HepG2 (cell line): ENCODE measurements at regions of chr2 and their contacts with region 1.

Region 1: GRCh38 chr2:23505984-23506380 is 121.0 kb downstream of the KLHL29 start:
- DNase-seq: no peak
- ATAC-seq: no peak
- H3K4me3 ChIP-seq: no peak overlapping the region
- H3K27ac ChIP-seq: no peak overlapping the region
- H3K4me1 ChIP-seq: peaks cover 34% of the 10 kb centered on the region
- H3K27me3 ChIP-seq: peaks cover 3 to 56% of the 10 kb centered on the region in 2 experiments
- CTCF ChIP-seq: no peak
- EP300 ChIP-seq: no peak
- POLR2A ChIP-seq: no peak
- RAD21 ChIP-seq: no peak

Region 2: DNA sequence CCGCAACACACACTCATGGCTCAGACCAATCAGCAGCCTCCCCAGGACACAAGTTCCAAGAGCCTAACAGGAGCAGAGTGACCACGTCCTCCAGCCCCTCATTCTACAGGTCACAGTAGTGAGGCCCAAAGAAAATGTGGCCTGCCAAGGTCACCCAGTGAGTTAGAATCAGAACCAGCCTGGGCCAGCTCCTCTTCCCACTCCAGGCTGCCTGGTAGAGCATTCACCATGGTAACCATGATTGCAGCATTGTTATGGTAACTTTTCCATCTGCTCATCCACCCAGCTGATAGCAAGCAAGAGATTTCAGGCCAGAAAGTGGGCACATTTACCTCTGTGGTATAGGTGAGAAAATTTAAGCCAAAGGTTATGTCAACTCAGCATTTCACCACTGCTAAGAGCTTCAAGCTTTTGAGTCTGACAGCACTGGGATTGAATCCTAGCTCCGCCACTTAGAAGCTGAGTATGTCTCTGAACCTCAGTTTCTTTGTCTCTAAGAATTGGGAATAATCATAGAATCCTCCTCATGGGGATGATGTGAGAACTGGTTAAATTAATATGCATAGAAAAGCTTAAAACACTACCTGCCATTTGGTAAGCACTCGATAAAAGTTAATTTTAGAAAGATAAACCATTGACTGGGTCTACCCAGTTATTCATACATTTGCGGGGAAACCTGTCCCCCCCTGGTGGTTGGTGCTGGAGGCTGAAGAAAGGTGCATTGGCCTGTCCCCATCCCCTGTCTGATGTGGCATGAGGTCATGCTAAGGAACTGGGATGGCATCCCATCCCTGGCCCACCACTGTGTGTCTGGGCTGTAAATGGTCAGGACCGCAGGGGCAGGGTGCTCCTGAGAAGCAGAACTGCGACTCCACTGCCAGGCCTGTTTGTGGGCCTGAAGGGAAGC is 60.5 kb after region 1 on chr2:
- CTCF ChIA-PET with region 1: no interaction called
- POLR2A ChIA-PET with region 1: no interaction called
- in situ Hi-C with region 1: no loop called
- intact Hi-C with region 1: loop called (anchors 2 kb)
- DNase-seq: peak; percentile 24
- ATAC-seq: peak; percentile 73
- H3K4me3 ChIP-seq: no peak overlapping the region
- H3K27ac ChIP-seq: no peak overlapping the region
- H3K4me1 ChIP-seq: no peaks in the 10 kb centered on the region
- H3K27me3 ChIP-seq: peaks cover 2 to 55% of the 10 kb centered on the region in 2 experiments; a peak in 4 of 5 replicates
- CTCF ChIP-seq: peak; percentile 52
- EP300 ChIP-seq: no peak
- POLR2A ChIP-seq: no peak
- RAD21 ChIP-seq: no peak